ENCODE measurements at regions of chr9 and their contacts with region 1.

Region 1: GRCh38 chr9:33290247-33291030 is at the start of gene NFX1:
- DNase-seq: peak; percentile 99
- ATAC-seq: peak; percentile 89
- H3K4me3 Mint-ChIP-seq: peak within 1 kb of the TSS; percentile 90
- H3K27ac Mint-ChIP-seq: peak within 1 kb of the TSS; percentile 99
- H3K4me1 Mint-ChIP-seq: peaks cover 64% of the 10 kb centered on the region
- H3K27me3 Mint-ChIP-seq: no peaks in the 10 kb centered on the region
- total RNA-seq, gene NFX1: 31.2 to 33.7 TPM

Region 2: DNA sequence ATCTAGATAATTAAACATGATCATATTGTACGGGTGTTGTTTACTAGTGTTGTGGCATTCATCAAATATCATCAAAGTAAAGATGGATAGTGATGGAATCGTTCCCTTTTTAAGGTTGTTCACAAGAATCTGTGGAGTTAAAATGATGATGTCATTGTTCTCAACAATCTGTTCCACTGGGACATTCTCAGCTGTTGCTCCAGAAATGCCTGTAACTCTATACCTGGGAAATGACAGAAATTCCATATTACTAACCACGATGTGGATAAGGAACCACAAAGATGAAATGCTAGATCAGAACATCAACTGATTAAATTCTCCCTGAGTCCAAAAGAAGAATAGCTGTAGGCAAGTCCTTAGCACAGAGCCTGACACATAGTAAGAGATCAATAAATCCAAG is 802.5 kb before region 1 on chr9:
- CTCF ChIA-PET with region 1: no interaction called
- POLR2A ChIA-PET with region 1: no interaction called
- intact Hi-C with region 1: no loop called
- DNase-seq: no peak
- ATAC-seq: no peak
- H3K4me3 Mint-ChIP-seq: no peak overlapping the region
- H3K27ac Mint-ChIP-seq: no peak overlapping the region
- H3K4me1 Mint-ChIP-seq: no peaks in the 10 kb centered on the region
- H3K27me3 Mint-ChIP-seq: no peaks in the 10 kb centered on the region

Region 3: GRCh38 chr9:32986971-32987370 is 303.5 kb before region 1 on chr9:
- CTCF ChIA-PET with region 1: no interaction called
- POLR2A ChIA-PET with region 1: no interaction called
- intact Hi-C with region 1: no loop called
- DNase-seq: no peak
- ATAC-seq: peak; percentile 30
- H3K4me3 Mint-ChIP-seq: no peak overlapping the region
- H3K27ac Mint-ChIP-seq: no peak overlapping the region
- H3K4me1 Mint-ChIP-seq: peaks cover 3% of the 10 kb centered on the region
- H3K27me3 Mint-ChIP-seq: no peaks in the 10 kb centered on the region

Region 4: DNA sequence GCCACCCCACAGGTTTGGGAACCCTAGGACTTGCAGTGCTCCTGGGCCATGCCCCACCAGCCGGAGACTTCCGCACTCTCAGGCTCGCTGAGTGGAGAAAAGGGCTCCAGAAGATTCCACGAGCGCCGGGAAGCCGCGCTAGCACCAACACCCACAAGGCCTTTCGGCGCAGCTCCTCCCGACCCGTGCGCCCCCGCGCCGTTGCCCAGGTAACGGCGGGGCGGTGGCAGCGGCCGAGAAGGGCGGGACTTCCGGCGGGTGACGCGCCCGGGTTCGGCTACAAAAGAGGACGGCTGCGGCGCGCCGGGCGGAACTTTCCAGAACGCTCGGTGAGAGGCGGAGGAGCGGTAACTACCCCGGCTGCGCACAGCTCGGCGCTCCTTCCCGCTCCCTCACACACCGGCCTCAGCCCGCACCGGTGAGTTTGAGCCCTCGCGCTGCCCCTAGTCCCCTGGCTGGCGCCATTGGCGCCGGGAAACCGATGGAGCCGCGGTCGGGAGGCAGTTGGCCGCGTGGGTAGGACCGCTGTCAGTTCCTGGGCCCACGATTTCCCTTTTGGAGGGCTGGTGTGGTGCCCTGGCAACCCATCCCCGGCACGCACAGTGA is 265.4 kb before region 1 on chr9 and contains the start of gene DNAJA1:
- CTCF ChIA-PET with region 1: no interaction called
- POLR2A ChIA-PET with region 1: interaction called, 10 read pairs
- intact Hi-C with region 1: loop called in 1 of 2 experiments (anchors 1 kb)
- DNase-seq: peak; percentile 97
- ATAC-seq: peak; percentile 82
- H3K4me3 Mint-ChIP-seq: peak within 1 kb of the TSS; percentile 98
- H3K27ac Mint-ChIP-seq: peak within 1 kb of the TSS; percentile 94
- H3K4me1 Mint-ChIP-seq: peaks cover 59% of the 10 kb centered on the region
- H3K27me3 Mint-ChIP-seq: no peaks in the 10 kb centered on the region
- total RNA-seq, gene DNAJA1: 198 to 266 TPM

Region 5: DNA sequence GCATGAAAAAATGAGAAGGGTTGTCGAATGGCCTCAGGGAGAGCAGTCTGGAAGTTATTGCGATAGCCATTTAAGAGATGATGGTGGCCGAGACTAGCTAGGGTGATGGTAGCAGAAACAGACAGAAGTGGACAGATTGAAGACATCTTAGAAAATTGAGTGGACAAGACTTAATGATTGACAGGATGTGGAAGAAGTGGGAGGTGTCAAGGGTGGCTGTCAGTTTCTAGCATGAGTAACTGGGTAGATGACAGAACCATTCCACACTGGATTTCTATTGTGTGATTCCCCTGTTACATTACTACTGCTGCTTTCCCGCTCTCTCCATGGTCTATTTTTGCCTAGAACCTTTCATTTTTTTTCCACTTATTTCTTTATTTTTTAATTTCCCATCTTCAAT is 13.0 kb before region 1 on chr9:
- CTCF ChIA-PET with region 1: interaction called, 13 read pairs
- POLR2A ChIA-PET with region 1: no interaction called
- intact Hi-C with region 1: no loop called
- DNase-seq: no peak
- ATAC-seq: no peak
- H3K4me3 Mint-ChIP-seq: no peak overlapping the region
- H3K27ac Mint-ChIP-seq: no peak overlapping the region
- H3K4me1 Mint-ChIP-seq: peaks cover 12% of the 10 kb centered on the region
- H3K27me3 Mint-ChIP-seq: no peaks in the 10 kb centered on the region

Region 6: GRCh38 chr9:33374634-33375213 is 84.3 kb after region 1 on chr9:
- CTCF ChIA-PET with region 1: interaction called, 21 read pairs
- POLR2A ChIA-PET with region 1: no interaction called
- intact Hi-C with region 1: loop called (anchors 1 to 5 kb)
- DNase-seq: peak; percentile 84
- ATAC-seq: peak; percentile 96
- H3K4me3 Mint-ChIP-seq: no peak overlapping the region
- H3K27ac Mint-ChIP-seq: no peak overlapping the region
- H3K4me1 Mint-ChIP-seq: peaks cover 7% of the 10 kb centered on the region
- H3K27me3 Mint-ChIP-seq: no peaks in the 10 kb centered on the region

Region 7: DNA sequence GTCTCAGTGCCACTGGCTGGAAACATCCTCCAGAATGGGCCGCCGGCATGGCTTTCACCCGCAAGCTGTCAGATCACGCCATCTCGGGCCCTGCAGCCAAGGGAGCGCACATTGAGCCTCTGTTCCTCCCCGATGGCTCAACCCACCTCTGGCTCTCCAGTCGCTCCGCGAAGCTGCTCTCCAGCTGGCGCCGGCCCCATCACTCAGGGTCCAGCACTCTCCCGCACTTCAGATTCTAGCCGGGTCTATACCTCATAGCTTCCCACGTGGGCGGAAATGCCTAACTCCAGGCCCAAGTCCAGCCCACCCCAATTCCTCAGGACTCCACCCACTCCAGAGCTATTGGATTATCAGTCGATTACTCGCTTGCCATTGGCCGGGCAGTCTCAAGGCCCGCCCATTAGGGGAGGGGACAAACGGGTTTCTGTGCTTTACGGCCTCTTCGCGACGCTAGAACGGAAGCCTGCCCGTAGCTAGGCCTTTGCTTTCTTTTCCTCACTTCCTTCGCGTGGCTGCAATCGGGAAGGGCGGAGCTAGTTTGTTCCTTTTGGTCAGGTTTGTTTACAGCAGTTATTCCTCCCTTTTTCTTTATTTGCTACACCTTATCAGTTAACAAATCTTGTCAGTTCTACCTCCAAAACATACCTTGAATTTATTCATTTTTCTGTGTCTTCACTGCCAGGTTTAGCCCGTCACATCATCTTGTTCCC is 183.4 kb after region 1 on chr9 and contains the start of gene NOL6:
- CTCF ChIA-PET with region 1: interaction called, 5 read pairs
- POLR2A ChIA-PET with region 1: interaction called, 5 read pairs
- intact Hi-C with region 1: loop called (anchors 1 kb)
- DNase-seq: peak; percentile 98
- ATAC-seq: peak; percentile 100
- H3K4me3 Mint-ChIP-seq: peak within 1 kb of the TSS; percentile 100
- H3K27ac Mint-ChIP-seq: peak within 1 kb of the TSS; percentile 95
- H3K4me1 Mint-ChIP-seq: peaks cover 22% of the 10 kb centered on the region
- H3K27me3 Mint-ChIP-seq: no peaks in the 10 kb centered on the region
- total RNA-seq, gene NOL6: 39.0 to 39.4 TPM

Region 8: GRCh38 chr9:34178520-34179212 is 888.2 kb after region 1 on chr9 and contains the start of gene UBAP1:
- CTCF ChIA-PET with region 1: no interaction called
- POLR2A ChIA-PET with region 1: no interaction called
- intact Hi-C with region 1: loop called in 1 of 2 experiments (anchors 10 kb)
- DNase-seq: peak; percentile 98
- ATAC-seq: peak; percentile 97
- H3K4me3 Mint-ChIP-seq: peak within 1 kb of the TSS; percentile 93
- H3K27ac Mint-ChIP-seq: peak within 1 kb of the TSS; percentile 96
- H3K4me1 Mint-ChIP-seq: peaks cover 20% of the 10 kb centered on the region
- H3K27me3 Mint-ChIP-seq: no peaks in the 10 kb centered on the region
- total RNA-seq, gene UBAP1: 29.5 to 43.3 TPM

Measured in activated CD4-positive, alpha-beta T cell treated with anti-CD3 and anti-CD28 coated beads for 36 hours (primary cell).